ENCODE measurements at regions of chr16 and their contacts with region 1.

Region 1: GRCh38 chr16:62585041-62585545 is 548.9 kb upstream of the CDH8 start:
- DNase-seq: no peak
- ATAC-seq: no peak
- H3K4me3 ChIP-seq: no peak overlapping the region
- H3K27ac ChIP-seq: no peak overlapping the region
- H3K4me1 ChIP-seq: no peaks in the 10 kb centered on the region
- H3K27me3 ChIP-seq: no peaks in the 10 kb centered on the region
- CTCF ChIP-seq: no peak

Region 2: GRCh38 chr16:61413021-61413420 is 1172.1 kb before region 1 on chr16:
- intact Hi-C with region 1: loop called in 1 of 10 experiments (anchors 10 kb)
- DNase-seq: no peak
- ATAC-seq: no peak
- H3K4me3 ChIP-seq: no peak overlapping the region
- H3K27ac ChIP-seq: no peak overlapping the region
- H3K4me1 ChIP-seq: no peaks in the 10 kb centered on the region
- H3K27me3 ChIP-seq: no peaks in the 10 kb centered on the region
- CTCF ChIP-seq: no peak

Region 3: DNA sequence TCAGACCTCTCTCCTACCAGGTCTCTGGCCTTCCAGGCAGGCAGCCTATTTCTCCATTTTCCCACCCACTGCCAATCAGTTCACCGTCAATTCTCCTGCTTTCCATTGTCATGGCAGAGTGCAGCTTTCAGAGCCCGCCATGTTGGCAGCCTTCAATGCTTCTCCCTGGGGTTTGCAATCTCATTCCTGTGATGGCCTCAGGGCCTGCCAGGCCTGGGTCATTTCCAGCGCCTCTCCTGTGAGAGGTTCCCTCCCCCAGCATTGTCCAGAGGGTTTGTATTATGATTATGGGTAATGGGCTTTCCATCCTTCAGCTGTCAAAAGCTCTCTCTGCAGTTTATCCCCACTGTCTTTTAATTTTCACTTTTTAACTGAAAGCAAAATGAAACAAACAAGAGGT is 167.8 kb after region 1 on chr16:
- intact Hi-C with region 1: no loop called
- DNase-seq: no peak
- ATAC-seq: no peak
- H3K4me3 ChIP-seq: no peak overlapping the region
- H3K27ac ChIP-seq: no peak overlapping the region
- H3K4me1 ChIP-seq: no peaks in the 10 kb centered on the region
- H3K27me3 ChIP-seq: no peaks in the 10 kb centered on the region
- CTCF ChIP-seq: no peak